CD8-positive, alpha-beta T cell (primary cell): ENCODE measurements at regions of chr10 and their contacts with region 1.

Region 1: DNA sequence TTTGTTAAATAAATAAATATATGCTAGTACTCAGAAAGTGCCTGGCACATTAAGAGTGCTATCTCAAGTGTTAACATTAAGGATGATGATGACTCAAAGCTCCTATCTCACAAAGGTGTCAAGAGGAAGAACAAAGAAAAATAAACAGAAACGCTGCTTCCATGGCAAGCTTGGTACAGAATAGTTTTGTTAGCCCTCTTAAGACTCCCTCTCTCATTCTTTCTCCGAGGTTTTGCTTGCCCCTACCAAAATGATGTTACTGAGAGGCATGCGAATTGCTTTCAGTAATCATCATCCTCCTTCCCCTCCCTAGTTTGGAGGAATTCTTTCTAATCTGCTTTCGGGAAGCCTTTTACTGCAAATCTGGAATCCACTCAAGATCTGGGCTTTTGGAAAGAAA is 96.7 kb downstream of the SORCS1 start:
- DNase-seq: no peak
- ATAC-seq: no peak
- H3K4me3 ChIP-seq: no peak overlapping the region
- H3K4me3 Mint-ChIP-seq: no peak overlapping the region
- H3K27ac ChIP-seq: no peak overlapping the region
- H3K27ac Mint-ChIP-seq: no peak overlapping the region
- H3K4me1 ChIP-seq: no peaks in the 10 kb centered on the region
- H3K4me1 Mint-ChIP-seq: no peaks in the 10 kb centered on the region
- H3K27me3 ChIP-seq: no peaks in the 10 kb centered on the region
- H3K27me3 Mint-ChIP-seq: no peaks in the 10 kb centered on the region
- CTCF ChIP-seq: no peak

Region 2: GRCh38 chr10:107391901-107392300 is 324.1 kb after region 1 on chr10:
- CTCF ChIA-PET with region 1: no interaction called
- POLR2A ChIA-PET with region 1: no interaction called
- intact Hi-C with region 1: no loop called
- DNase-seq: no peak
- ATAC-seq: no peak
- H3K4me3 ChIP-seq: no peak overlapping the region
- H3K4me3 Mint-ChIP-seq: no peak overlapping the region
- H3K27ac ChIP-seq: no peak overlapping the region
- H3K27ac Mint-ChIP-seq: no peak overlapping the region
- H3K4me1 ChIP-seq: no peaks in the 10 kb centered on the region
- H3K4me1 Mint-ChIP-seq: no peaks in the 10 kb centered on the region
- H3K27me3 ChIP-seq: no peaks in the 10 kb centered on the region
- H3K27me3 Mint-ChIP-seq: no peaks in the 10 kb centered on the region
- CTCF ChIP-seq: no peak

Region 3: DNA sequence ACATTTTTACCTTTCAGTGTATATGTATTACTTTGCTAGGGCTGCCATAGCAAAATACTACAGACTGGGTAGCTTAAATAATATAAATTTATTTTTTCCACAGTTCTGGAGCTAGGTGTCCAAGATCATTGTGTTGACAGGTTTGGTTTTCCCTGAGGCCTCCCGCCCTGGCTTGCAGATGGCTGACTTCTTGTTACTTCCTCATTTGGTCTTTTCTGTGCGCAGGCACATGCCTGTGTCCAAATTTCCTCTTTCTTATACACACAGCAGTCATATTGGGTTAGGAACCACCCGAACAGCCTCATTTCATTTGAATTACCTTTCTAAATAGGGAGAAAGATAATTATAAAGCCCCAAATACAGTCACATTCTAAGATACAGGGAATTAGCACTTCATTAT is 618.3 kb after region 1 on chr10:
- CTCF ChIA-PET with region 1: no interaction called
- POLR2A ChIA-PET with region 1: no interaction called
- intact Hi-C with region 1: loop called in 1 of 2 experiments (anchors 5 kb)
- DNase-seq: peak in 2 of 9 experiments; percentile 10 to 14
- ATAC-seq: no peak
- H3K4me3 ChIP-seq: no peak overlapping the region
- H3K4me3 Mint-ChIP-seq: no peak overlapping the region
- H3K27ac ChIP-seq: no peak overlapping the region
- H3K27ac Mint-ChIP-seq: no peak overlapping the region
- H3K4me1 ChIP-seq: no peaks in the 10 kb centered on the region
- H3K4me1 Mint-ChIP-seq: no peaks in the 10 kb centered on the region
- H3K27me3 ChIP-seq: no peaks in the 10 kb centered on the region
- H3K27me3 Mint-ChIP-seq: no peaks in the 10 kb centered on the region
- CTCF ChIP-seq: no peak